ENCODE measurements at regions of chr10 and their contacts with region 1.

Region 1: DNA sequence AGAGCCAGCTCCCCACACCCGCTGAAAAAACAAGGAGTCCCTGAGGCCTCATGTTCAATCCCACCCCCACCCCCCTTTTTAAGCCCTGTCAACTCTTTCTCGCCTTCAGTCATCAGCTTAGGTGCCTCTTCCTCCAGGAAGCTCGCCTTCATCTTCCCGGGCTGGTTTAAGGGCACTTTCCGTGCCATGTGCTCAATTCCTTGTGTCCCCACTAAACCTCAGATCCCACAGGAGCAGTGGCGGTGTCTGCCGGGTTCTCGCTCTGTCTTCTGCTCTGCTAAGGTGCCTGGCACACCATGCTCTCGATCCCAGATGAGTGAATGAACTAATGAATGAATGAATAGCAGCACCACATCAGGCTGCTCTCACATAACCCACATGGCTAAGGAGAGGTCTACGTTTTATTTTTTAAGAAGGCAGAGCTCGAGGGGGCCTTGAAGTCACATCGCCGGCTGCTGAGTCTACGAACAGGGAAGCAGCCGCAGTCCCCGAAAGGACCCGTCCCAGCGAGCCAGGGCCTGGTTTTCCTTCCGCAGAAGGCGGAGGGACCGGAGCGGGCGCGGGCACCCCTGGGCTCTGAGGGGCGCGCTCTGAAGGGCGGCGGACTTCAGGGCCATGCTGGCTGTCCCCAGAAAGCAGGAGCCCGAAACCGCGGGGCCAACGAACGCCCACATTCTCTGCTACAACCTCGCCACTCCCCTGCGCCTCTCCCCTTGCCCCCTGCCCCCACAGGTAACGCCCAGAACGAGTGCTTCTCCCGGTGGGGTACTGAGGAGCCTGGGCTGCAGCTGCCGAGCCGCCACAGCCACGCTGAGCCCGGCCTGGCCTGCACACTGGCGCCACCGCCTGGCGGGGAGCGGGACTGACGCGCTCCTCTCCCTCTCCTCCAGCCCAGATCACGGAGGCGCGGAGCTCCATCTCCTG is 73.4 kb upstream of the KCNMA1 start:
- DNase-seq: peak; percentile 76
- ATAC-seq: peak; percentile 93 to 98

Region 2: GRCh38 chr10:77165445-77166208 is 545.4 kb before region 1 on chr10:
- intact Hi-C with region 1: loop called (anchors 5 to 10 kb)
- DNase-seq: no peak
- ATAC-seq: peak; percentile 47 to 55

Region 3: DNA sequence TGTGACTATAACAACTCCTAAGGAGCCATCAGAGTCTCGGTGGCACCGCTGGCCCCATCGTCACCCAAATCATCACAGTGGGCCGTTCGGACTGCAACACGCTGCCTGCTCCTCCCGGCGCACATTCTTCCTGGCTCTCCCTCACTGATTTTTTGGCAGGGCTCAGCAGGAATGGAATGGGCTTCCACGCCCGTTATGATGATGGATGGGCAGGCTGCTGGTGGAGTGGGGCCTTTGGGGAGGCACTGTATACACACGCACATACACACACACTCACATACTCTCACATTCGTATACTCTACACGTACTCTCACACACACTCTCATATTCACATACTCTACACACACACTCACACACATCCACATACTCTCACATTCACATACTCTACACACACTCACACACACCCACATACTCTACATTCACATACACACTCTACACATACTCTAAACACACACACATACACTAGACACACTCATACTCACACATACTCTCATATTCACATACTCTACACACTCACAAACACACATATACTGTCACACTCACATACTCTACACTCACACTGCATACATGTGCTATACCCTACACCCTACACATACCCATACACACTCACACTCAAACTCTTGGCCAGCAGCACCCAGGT is 173.2 kb before region 1 on chr10:
- intact Hi-C with region 1: no loop called
- DNase-seq: no peak
- ATAC-seq: peak; percentile 30 to 55

Measured in left cardiac atrium (tissue), 4 donors.